GM10248 (cell line): ENCODE measurements at regions of chr2 and their contacts with region 1.

Region 1: DNA sequence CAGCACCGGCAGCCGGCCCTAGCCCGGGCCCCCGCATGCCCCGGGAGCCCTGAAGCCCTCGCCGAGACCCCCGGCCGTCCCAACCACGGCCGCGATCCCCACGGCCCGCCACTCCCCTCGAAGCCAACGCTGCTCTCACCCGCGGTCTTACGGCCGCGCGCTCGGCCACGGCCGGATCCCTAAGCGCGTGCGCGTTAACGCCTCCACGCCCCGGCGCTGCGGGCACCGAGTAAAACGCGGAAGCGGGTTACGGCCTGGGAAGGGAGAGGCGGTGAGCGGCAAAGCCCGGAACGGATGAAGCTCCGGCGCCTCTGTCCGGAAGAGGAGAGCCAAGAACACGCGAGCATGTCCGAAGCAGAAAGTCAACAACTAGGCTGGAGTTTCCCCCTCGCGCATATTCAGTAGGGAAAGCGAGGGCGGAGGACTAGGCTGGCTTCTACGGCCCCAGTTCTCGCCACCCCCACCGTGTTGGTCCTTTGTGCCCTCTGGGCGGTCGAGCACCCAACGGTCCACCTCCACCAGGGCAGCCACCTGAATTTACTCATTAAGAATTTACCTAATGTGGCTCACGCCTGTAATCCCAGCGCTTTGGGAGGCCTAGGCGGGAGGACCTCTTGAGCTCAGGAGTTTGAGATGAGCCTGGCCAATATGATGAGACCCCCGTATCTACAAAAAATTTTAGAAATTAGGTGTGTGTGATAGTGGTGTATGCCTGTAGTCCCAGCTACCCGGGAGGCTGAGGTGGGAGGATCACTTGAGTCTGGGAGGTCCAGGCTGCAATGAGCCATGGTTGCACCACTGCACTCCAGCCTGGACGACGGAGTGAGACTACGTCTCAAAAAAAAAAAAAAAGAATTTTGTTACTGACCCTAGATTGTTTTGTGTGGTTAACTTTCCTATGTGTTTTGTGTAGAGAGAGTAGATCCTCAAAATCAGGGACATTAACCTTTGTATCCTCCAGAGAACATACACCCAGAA is at the start of gene KANSL3:
- DNase-seq: peak; percentile 90
- CTCF ChIP-seq: no peak

Region 2: GRCh38 chr2:96389736-96390135 is 248.7 kb before region 1 on chr2:
- CTCF ChIA-PET with region 1: no interaction called
- POLR2A ChIA-PET with region 1: interaction called, 10 read pairs
- DNase-seq: no peak
- CTCF ChIP-seq: no peak

Region 3: DNA sequence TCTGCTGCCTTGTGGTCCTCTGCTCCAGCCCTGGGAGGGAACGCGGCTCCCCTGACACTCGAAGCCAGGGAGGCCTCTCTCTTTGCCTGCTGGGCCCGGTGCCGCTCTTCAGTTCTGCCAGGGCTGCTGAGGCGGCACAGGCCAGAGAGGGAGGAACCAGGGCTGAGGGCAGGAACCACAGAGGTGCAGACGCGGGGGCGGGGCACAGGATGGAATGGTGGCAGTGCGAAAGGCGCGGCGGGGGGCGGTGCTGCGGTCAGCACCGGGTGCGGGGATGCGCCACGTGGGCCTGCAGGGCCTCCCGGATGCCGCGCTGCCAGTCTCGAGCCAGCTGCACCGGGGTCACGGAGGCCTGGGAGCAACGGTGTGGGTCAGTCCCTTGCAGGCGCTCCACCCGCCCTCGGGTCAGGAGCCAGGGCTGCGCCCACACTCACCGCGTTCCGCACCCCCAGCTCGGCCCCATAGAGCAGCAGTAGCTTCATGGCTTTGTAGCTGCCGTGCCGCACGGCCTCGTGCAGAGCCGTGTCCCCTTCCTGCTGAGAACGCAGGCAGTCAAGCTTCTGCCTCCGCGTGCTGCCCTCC is 201.0 kb after region 1 on chr2:
- CTCF ChIA-PET with region 1: no interaction called
- POLR2A ChIA-PET with region 1: no interaction called
- DNase-seq: peak; percentile 51
- CTCF ChIP-seq: no peak